Dendritic cell treated with granulocyte-macrophage colony-stimulating factor and Interleukin-4, amounts not matched to agents 40 ng/mL and 50 ng/mL, for 4 days (primary cell): ENCODE measurements at regions of chr12 and their contacts with region 1.

Region 1: GRCh38 chr12:126069549-126070165 is 1004.4 kb downstream of the AACS start:
- H3K4me3 Mint-ChIP-seq: no peak overlapping the region
- H3K27ac Mint-ChIP-seq: no peak overlapping the region
- H3K4me1 Mint-ChIP-seq: no peaks in the 10 kb centered on the region
- H3K27me3 Mint-ChIP-seq: no peaks in the 10 kb centered on the region

Region 2: GRCh38 chr12:126874427-126875026 is 804.9 kb after region 1 on chr12:
- intact Hi-C with region 1: loop called (anchors 5 kb)
- H3K4me3 Mint-ChIP-seq: no peak overlapping the region
- H3K27ac Mint-ChIP-seq: no peak overlapping the region
- H3K4me1 Mint-ChIP-seq: no peaks in the 10 kb centered on the region
- H3K27me3 Mint-ChIP-seq: no peaks in the 10 kb centered on the region

Region 3: GRCh38 chr12:127381048-127381668 is 1311.5 kb after region 1 on chr12:
- intact Hi-C with region 1: loop called (anchors 5 kb)
- H3K4me3 Mint-ChIP-seq: no peak overlapping the region
- H3K27ac Mint-ChIP-seq: no peak overlapping the region
- H3K4me1 Mint-ChIP-seq: no peaks in the 10 kb centered on the region
- H3K27me3 Mint-ChIP-seq: peaks cover 3% of the 10 kb centered on the region

Region 4: GRCh38 chr12:128069359-128069997 is 1999.8 kb after region 1 on chr12:
- intact Hi-C with region 1: loop called (anchors 10 kb)
- H3K4me3 Mint-ChIP-seq: no peak overlapping the region
- H3K27ac Mint-ChIP-seq: no peak overlapping the region
- H3K4me1 Mint-ChIP-seq: no peaks in the 10 kb centered on the region
- H3K27me3 Mint-ChIP-seq: no peaks in the 10 kb centered on the region